ENCODE measurements at regions of chr4 and their contacts with region 1.

Region 1: GRCh38 chr4:81954271-81954670 is 419.5 kb downstream of the HNRNPD start:
- DNase-seq: peak; percentile 49 to 56
- H3K4me3 ChIP-seq: no peak overlapping the region
- H3K4me3 Mint-ChIP-seq: peak overlapping the region; percentile 69
- H3K27ac Mint-ChIP-seq: peak overlapping the region; percentile 92
- H3K4me1 ChIP-seq: peaks cover 60% of the 10 kb centered on the region
- H3K4me1 Mint-ChIP-seq: peaks cover 18% of the 10 kb centered on the region
- H3K27me3 ChIP-seq: no peaks in the 10 kb centered on the region
- H3K27me3 Mint-ChIP-seq: no peaks in the 10 kb centered on the region
- CTCF ChIP-seq: no peak

Region 2: GRCh38 chr4:81919238-81919637 is 35.0 kb before region 1 on chr4:
- CTCF ChIA-PET with region 1: no interaction called
- POLR2A ChIA-PET with region 1: no interaction called
- intact Hi-C with region 1: loop called (anchors 2 kb)
- DNase-seq: peak; percentile 46 to 49
- H3K4me3 ChIP-seq: no peak overlapping the region
- H3K4me3 Mint-ChIP-seq: no peak overlapping the region
- H3K27ac Mint-ChIP-seq: no peak overlapping the region
- H3K4me1 ChIP-seq: peaks cover 5% of the 10 kb centered on the region; the same call in 1 of the 2 replicates
- H3K4me1 Mint-ChIP-seq: peaks cover 13% of the 10 kb centered on the region
- H3K27me3 ChIP-seq: no peaks in the 10 kb centered on the region
- H3K27me3 Mint-ChIP-seq: no peaks in the 10 kb centered on the region
- CTCF ChIP-seq: peak in 1 of 2 experiments; percentile 63

Region 3: DNA sequence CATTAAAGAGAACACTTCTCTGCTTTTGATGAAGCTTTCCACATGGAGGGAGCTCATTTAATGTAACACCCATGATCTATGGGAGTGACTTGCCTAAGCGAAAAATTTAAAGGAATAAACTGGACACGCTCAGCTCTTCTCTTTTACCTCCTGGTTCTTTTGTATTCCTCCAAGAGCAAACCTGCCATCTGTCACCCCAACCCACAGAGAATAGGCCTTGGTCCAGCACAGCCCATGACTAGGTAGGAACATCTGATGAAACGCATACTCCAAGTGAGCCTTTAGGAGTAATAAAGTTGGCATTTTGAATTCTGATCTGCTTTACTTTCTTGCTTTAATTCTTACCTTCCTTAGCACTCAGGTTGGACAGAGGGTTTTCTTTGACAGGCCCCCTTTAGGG is 30.5 kb after region 1 on chr4:
- CTCF ChIA-PET with region 1: no interaction called
- POLR2A ChIA-PET with region 1: interaction called, 5 read pairs
- intact Hi-C with region 1: loop called (anchors 5 kb)
- DNase-seq: no peak
- H3K4me3 ChIP-seq: no peak overlapping the region
- H3K4me3 Mint-ChIP-seq: no peak overlapping the region
- H3K27ac Mint-ChIP-seq: no peak overlapping the region
- H3K4me1 ChIP-seq: peaks cover 21% of the 10 kb centered on the region
- H3K4me1 Mint-ChIP-seq: peaks cover 9% of the 10 kb centered on the region
- H3K27me3 ChIP-seq: no peaks in the 10 kb centered on the region
- H3K27me3 Mint-ChIP-seq: no peaks in the 10 kb centered on the region
- CTCF ChIP-seq: no peak

Region 4: DNA sequence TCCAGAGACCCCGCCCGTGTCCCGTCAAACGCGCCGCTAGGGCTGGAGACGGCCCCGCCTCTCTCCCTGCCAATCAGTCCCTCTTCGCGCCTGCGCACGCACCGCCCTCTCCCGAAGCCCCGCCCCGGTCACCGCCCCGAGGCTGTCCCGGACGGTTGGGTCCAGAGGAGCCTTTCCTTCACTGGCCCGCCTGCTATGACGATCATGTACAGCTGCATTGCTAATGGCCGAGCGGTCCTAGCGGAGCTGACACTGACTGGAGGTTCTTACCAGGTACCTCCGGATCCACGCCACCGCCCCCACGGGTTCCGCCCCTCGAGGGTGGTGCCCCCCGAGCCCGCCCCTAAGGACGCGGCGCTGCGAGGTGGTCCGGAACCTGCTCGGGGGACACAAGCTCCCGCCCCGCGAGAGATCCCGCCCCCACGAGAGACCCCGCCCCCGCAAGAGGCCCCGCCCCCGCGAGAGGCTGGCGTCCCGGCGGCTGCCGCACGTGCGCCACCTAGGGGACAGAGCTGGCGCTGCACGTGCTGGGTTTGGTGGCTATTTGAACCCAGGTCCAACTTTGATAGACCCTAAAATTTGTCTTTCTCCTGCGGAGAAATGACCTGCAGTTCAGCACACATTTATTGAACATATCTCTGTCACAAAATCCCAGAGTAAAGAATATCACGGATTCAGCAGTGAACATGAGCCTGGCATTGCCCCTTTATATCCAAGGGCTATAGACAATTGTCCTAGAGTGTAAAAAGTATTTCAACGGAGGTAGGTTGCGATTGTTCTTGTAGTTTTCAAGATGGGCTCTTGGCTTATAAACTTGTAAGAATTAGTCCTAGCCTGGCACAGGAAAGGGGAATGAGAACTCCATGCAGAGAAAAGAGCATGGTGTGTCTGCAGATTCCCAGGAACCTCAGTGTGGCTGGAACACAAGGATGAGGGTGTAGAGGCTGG is 330.9 kb after region 1 on chr4:
- CTCF ChIA-PET with region 1: interaction called, 7 read pairs
- POLR2A ChIA-PET with region 1: no interaction called
- intact Hi-C with region 1: loop called (anchors 5 kb)
- DNase-seq: peak; percentile 100
- H3K4me3 ChIP-seq: peak overlapping the region; percentile 47
- H3K4me3 Mint-ChIP-seq: peak overlapping the region; percentile 66
- H3K27ac Mint-ChIP-seq: no peak overlapping the region
- H3K4me1 ChIP-seq: peaks cover 12% of the 10 kb centered on the region
- H3K4me1 Mint-ChIP-seq: peaks cover 19% of the 10 kb centered on the region
- H3K27me3 ChIP-seq: no peaks in the 10 kb centered on the region
- H3K27me3 Mint-ChIP-seq: no peaks in the 10 kb centered on the region
- CTCF ChIP-seq: peak; percentile 81 to 95